Activated T-helper 1 cell treated with anti-CD3 and anti-CD28 coated beads, Interleukin-12 subunit alpha, Interleukin-12 subunit beta, Interleukin-2, Interleukin-4 antibody, amounts not matched to agents 30 ng/mL and 10 ng/mL and 1 ng/mL, durations not matched to agents 14 hours and 24 hours and 36 hours (primary cell): ENCODE measurements at regions of chr14 and their contacts with region 1.

Region 1: DNA sequence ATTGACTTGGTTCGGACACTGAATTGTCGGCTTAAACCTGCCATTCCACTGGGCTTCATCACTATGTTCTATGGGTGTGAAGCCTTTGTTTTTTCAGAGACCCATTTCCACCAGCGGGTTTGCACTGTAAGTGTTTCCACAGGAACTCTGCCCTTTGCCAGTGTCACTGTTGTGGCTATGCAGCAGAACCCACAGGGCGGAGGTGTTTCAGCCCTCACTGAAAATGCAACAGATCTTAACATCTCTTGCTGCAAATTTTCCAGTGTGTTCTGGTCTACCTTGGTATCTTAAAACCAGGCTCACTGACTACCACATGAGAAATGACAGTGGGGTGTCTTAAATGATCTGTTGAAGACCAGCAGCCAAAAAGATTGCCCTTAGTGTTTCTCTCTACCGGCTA is 21.1 kb downstream of the PRKCH start:
- DNase-seq: peak; percentile 85
- H3K4me3 Mint-ChIP-seq: peak overlapping the region; percentile 82
- H3K27ac Mint-ChIP-seq: peak overlapping the region; percentile 97
- H3K4me1 Mint-ChIP-seq: peaks cover 92% of the 10 kb centered on the region
- H3K27me3 Mint-ChIP-seq: no peaks in the 10 kb centered on the region

Region 2: GRCh38 chr14:61355892-61356325 is 13.4 kb after region 1 on chr14:
- intact Hi-C with region 1: loop called (anchors 1 kb)
- DNase-seq: no peak
- H3K4me3 Mint-ChIP-seq: peak overlapping the region; percentile 54
- H3K27ac Mint-ChIP-seq: peak overlapping the region; percentile 92
- H3K4me1 Mint-ChIP-seq: peaks cover 87% of the 10 kb centered on the region
- H3K27me3 Mint-ChIP-seq: no peaks in the 10 kb centered on the region